ENCODE measurements at regions of chr1 and their contacts with region 1.

Region 1: GRCh38 chr1:20165522-20165951 is 20.4 kb upstream of the UBXN10 start:
- DNase-seq: no peak
- H3K4me3 ChIP-seq: no peak overlapping the region
- H3K27ac ChIP-seq: no peak overlapping the region
- H3K4me1 ChIP-seq: peaks cover 0 to 5% (median 0%) of the 10 kb centered on the region in 4 experiments; a peak in 2 of 7 replicates
- H3K27me3 ChIP-seq: no peaks in the 10 kb centered on the region
- CTCF ChIP-seq: peak; percentile 33 to 74 (median 65)
- EP300 ChIP-seq: no peak
- POLR2A ChIP-seq: no peak
- RAD21 ChIP-seq: peak; percentile 58 to 74

Region 2: GRCh38 chr1:19918057-19918456 is 247.5 kb before region 1 on chr1:
- CTCF ChIA-PET with region 1: interaction called, 10 read pairs
- POLR2A ChIA-PET with region 1: interaction called, 3 read pairs
- DNase-seq: peak; percentile 43 to 92
- H3K4me3 ChIP-seq: no peak overlapping the region
- H3K27ac ChIP-seq: no peak overlapping the region
- H3K4me1 ChIP-seq: peaks cover 0 to under 1% (median 0%) of the 10 kb centered on the region in 4 experiments; a peak in 1 of 7 replicates
- H3K27me3 ChIP-seq: no peaks in the 10 kb centered on the region
- CTCF ChIP-seq: peak; percentile 72 to 95 (median 87)
- EP300 ChIP-seq: no peak
- POLR2A ChIP-seq: no peak
- RAD21 ChIP-seq: peak; percentile 96 to 98

Region 3: DNA sequence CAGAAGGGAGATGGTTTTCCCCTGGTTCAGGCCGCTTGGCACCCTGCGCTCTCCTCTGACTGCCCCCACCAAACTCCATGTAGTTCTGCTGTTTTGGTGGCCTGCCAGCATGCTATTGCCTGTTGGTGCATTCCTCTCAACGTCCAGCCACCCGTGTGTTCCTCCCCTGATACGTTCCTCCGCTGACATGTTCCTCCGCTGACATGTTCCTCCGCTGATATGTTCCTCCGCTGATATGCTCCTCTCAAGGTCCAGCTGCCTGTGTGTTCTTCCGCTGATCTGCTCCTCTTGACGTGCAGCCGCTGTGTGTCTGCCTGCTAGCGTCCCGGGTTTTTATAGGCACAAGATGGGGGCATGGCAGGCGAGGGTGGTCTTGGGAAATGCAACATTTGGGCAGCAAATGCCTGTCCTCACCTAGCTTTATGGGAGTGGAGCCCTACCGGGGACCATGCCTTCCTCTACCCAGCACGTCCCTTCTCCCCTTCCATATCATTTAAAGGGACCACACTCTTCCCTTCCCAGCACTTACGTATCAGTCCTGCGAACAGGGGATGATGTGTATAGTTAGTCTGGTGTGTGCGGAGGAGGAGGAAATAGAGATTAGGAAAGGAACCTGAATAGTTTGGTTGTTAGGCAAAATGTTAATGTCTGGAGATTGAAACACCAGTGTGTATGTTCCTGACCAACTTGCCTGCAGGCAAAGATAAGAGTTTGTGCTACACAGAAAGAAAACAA is 136.2 kb before region 1 on chr1:
- CTCF ChIA-PET with region 1: no interaction called
- POLR2A ChIA-PET with region 1: no interaction called
- DNase-seq: no peak
- H3K4me3 ChIP-seq: no peak overlapping the region
- H3K27ac ChIP-seq: no peak overlapping the region
- H3K4me1 ChIP-seq: no peaks in the 10 kb centered on the region
- H3K27me3 ChIP-seq: no peaks in the 10 kb centered on the region
- CTCF ChIP-seq: no peak
- EP300 ChIP-seq: no peak
- POLR2A ChIP-seq: no peak
- RAD21 ChIP-seq: no peak

Region 4: GRCh38 chr1:20100632-20101355 is 64.7 kb before region 1 on chr1:
- CTCF ChIA-PET with region 1: interaction called, 26 read pairs
- POLR2A ChIA-PET with region 1: no interaction called
- DNase-seq: peak; percentile 47 to 75
- H3K4me3 ChIP-seq: no peak overlapping the region
- H3K27ac ChIP-seq: no peak overlapping the region
- H3K4me1 ChIP-seq: peaks cover 0 to 3% (median 0%) of the 10 kb centered on the region in 4 experiments; a peak in 2 of 7 replicates
- H3K27me3 ChIP-seq: no peaks in the 10 kb centered on the region; a peak in 1 of 7 replicates
- CTCF ChIP-seq: peak; percentile 67 to 89 (median 79)
- EP300 ChIP-seq: no peak
- POLR2A ChIP-seq: no peak
- RAD21 ChIP-seq: peak; percentile 87 to 90

Region 5: DNA sequence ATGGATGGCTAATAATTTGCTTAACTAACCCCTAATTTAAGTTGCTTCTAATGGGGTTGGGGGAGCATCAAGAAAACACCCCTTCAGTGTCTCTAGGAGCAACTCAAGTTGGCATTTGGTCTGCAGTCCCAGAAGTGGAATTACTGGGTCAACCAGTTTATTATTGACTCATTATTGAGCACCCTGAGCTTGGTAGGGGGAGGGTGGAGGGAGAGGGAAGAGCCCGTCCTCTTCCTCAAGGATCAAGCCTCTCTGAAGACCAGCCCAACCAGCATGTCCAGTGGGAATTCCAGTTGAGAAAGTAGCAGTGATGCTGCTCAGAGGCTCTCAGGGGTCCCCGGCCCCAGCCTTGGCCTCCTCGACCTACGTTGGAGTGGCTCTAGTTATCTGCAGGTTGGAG is 28.5 kb before region 1 on chr1:
- CTCF ChIA-PET with region 1: no interaction called
- POLR2A ChIA-PET with region 1: no interaction called
- DNase-seq: no peak
- H3K4me3 ChIP-seq: no peak overlapping the region
- H3K27ac ChIP-seq: no peak overlapping the region
- H3K4me1 ChIP-seq: no peaks in the 10 kb centered on the region
- H3K27me3 ChIP-seq: no peaks in the 10 kb centered on the region
- CTCF ChIP-seq: no peak
- EP300 ChIP-seq: no peak
- POLR2A ChIP-seq: no peak
- RAD21 ChIP-seq: no peak

Region 6: DNA sequence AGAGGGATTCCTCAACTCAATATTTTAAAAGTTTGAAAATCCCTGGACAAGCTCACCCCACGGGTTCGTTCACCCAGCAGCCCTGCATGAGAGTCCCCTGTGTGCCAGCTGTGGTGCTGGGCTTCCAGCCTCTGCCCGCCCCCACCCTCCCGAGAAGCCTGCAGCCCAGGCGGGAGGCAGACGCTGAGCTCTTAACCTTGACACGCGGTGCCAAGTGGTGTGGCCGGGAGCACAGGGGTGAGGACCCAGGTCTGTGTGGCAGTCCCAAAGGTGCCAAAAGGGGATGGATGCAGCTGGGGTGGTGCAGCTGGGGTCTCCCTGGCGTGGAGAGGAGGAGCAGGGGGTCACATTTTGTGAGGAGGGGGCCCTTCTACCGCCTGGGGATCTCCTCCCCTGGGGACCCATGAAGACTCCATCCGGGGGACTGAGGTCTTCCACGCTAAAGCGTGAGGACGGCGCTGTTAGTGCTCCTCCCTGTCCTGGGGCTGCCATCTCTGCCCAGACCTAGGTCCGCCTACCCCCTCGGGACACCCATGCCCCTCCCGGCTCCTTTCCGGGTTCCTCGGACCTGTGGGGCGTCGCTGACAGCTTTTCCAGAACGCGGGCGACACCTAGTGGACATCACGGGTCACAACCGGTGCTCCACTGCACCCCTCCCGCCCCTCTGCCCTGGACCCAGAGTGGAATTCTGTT is 13.5 kb before region 1 on chr1:
- CTCF ChIA-PET with region 1: interaction called, 59 read pairs
- POLR2A ChIA-PET with region 1: interaction called, 4 read pairs
- DNase-seq: peak; percentile 61 to 95
- H3K4me3 ChIP-seq: peak overlapping the region in 3 of 4 experiments; percentile 34 to 50 (median 38); a peak in 4 of 8 replicates
- H3K27ac ChIP-seq: no peak overlapping the region
- H3K4me1 ChIP-seq: peaks cover 0 to 11% (median 5%) of the 10 kb centered on the region in 4 experiments; a peak in 6 of 7 replicates
- H3K27me3 ChIP-seq: no peaks in the 10 kb centered on the region
- CTCF ChIP-seq: peak; percentile 89 to 92 (median 90)
- EP300 ChIP-seq: no peak
- POLR2A ChIP-seq: no peak
- RAD21 ChIP-seq: peak; percentile 96 to 97

Region 7: GRCh38 chr1:20194757-20195461 is 29.4 kb after region 1 on chr1:
- CTCF ChIA-PET with region 1: interaction called, 89 read pairs
- POLR2A ChIA-PET with region 1: no interaction called
- DNase-seq: peak in 1 of 2 experiments; percentile 82
- H3K4me3 ChIP-seq: no peak overlapping the region; a peak in 1 of 8 replicates
- H3K27ac ChIP-seq: no peak overlapping the region
- H3K4me1 ChIP-seq: peaks cover 0 to 7% (median under 1%) of the 10 kb centered on the region in 4 experiments; a peak in 4 of 7 replicates
- H3K27me3 ChIP-seq: peaks cover 0 to 2% (median 0%) of the 10 kb centered on the region in 4 experiments; a peak in 2 of 7 replicates
- CTCF ChIP-seq: peak; percentile 83 to 92 (median 91)
- EP300 ChIP-seq: no peak
- POLR2A ChIP-seq: no peak
- RAD21 ChIP-seq: peak; percentile 67 to 77

Region 8: DNA sequence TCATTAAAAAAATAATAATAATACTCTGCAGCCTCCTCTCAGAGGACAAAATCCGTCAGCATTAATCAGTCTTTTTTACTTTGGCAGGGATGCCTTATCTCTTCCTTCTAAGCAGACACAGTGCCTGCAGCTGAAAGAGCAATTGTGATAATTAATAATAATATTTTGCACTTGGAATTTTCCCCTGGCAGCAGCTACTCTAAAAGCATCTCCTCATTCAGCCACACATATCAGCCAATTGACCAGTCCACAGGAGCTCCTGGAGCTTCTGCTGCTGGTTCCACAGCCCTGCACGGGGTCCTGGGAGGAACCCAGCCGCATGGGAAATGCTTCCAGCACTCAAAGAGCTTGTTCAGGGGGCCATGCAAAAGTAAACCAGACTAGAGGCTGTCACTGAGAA is 94.1 kb after region 1 on chr1:
- CTCF ChIA-PET with region 1: no interaction called
- POLR2A ChIA-PET with region 1: no interaction called
- DNase-seq: no peak
- H3K4me3 ChIP-seq: no peak overlapping the region
- H3K27ac ChIP-seq: no peak overlapping the region
- H3K4me1 ChIP-seq: 0 out of 7 replicates have a peak, but pooled peaks cover 0 to 2% (median 0%) of the 10 kb centered on the region in 4 experiments
- H3K27me3 ChIP-seq: no peaks in the 10 kb centered on the region
- CTCF ChIP-seq: no peak
- EP300 ChIP-seq: no peak
- POLR2A ChIP-seq: no peak
- RAD21 ChIP-seq: no peak

Region 9: GRCh38 chr1:20318971-20319370 is 153.4 kb after region 1 on chr1:
- CTCF ChIA-PET with region 1: no interaction called
- POLR2A ChIA-PET with region 1: no interaction called
- DNase-seq: no peak
- H3K4me3 ChIP-seq: no peak overlapping the region
- H3K27ac ChIP-seq: no peak overlapping the region
- H3K4me1 ChIP-seq: no peaks in the 10 kb centered on the region
- H3K27me3 ChIP-seq: no peaks in the 10 kb centered on the region
- CTCF ChIP-seq: no peak
- EP300 ChIP-seq: no peak
- POLR2A ChIP-seq: no peak
- RAD21 ChIP-seq: no peak

Measured in H1 (cell line).